AG04449 (cell line): ENCODE measurements at regions of chr17 and their contacts with region 1.

Region 1: GRCh38 chr17:15502369-15503112 is 35.1 kb upstream of the CDRT4 start:
- DNase-seq: peak; percentile 67
- H3K4me3 ChIP-seq: peak overlapping the region; percentile 33
- CTCF ChIP-seq: peak; percentile 88

Region 2: DNA sequence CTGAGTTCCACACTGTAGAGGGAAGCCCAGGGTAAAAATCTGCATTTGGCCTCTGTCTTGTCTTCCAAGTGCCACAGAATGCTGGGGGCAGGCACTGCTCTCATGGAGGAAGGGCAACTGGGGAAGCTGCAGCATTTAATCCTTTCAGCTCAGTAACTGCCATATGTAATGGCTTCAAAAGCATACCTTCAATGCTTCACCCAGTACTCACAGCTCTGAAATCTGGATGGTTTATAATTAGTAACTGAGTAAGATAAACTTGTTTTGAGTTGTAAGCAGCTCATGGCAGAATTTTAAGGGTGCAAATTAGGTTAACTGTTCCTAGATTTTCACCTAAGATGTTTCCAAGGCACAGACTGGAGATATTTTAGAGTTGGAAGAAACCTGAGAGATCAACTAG is 261.9 kb before region 1 on chr17:
- CTCF ChIA-PET with region 1: interaction called, 21 read pairs
- POLR2A ChIA-PET with region 1: interaction called, 3 read pairs
- DNase-seq: no peak
- H3K4me3 ChIP-seq: no peak overlapping the region
- CTCF ChIP-seq: no peak

Region 3: GRCh38 chr17:15257258-15257788 is 245.2 kb before region 1 on chr17:
- CTCF ChIA-PET with region 1: interaction called, 318 read pairs
- POLR2A ChIA-PET with region 1: interaction called, 4 read pairs
- DNase-seq: no peak
- H3K4me3 ChIP-seq: peak overlapping the region; percentile 19; the same call in 1 of the 2 replicates
- CTCF ChIP-seq: peak; percentile 91

Region 4: GRCh38 chr17:15361151-15361550 is 141.4 kb before region 1 on chr17:
- CTCF ChIA-PET with region 1: no interaction called
- POLR2A ChIA-PET with region 1: no interaction called
- DNase-seq: no peak
- H3K4me3 ChIP-seq: no peak overlapping the region
- CTCF ChIP-seq: no peak

Region 5: DNA sequence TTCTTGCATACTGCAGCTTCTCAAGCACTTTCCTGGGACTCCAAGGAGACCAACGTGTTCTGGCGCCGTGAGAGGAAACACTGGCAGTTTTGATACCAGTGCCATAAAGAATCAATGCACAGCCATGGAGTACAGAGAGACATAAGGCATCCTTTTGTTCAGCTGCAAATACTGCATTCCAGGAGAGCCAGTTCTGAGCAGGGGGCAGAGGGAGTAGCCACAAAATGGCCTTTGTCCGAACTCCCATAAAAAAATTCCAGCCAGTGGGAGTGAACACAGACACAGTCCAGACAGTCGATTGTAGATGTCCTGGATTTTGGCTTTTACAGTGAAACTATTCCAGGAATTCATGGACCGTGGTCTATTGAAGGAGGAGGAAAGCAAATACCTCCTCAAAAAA is 124.9 kb before region 1 on chr17:
- CTCF ChIA-PET with region 1: interaction called, 12 read pairs
- POLR2A ChIA-PET with region 1: no interaction called
- DNase-seq: peak; percentile 21
- H3K4me3 ChIP-seq: no peak overlapping the region
- CTCF ChIP-seq: no peak

Region 6: GRCh38 chr17:15438491-15439105 is 63.9 kb before region 1 on chr17:
- CTCF ChIA-PET with region 1: no interaction called
- POLR2A ChIA-PET with region 1: no interaction called
- DNase-seq: no peak
- H3K4me3 ChIP-seq: no peak overlapping the region
- CTCF ChIP-seq: no peak

Region 7: DNA sequence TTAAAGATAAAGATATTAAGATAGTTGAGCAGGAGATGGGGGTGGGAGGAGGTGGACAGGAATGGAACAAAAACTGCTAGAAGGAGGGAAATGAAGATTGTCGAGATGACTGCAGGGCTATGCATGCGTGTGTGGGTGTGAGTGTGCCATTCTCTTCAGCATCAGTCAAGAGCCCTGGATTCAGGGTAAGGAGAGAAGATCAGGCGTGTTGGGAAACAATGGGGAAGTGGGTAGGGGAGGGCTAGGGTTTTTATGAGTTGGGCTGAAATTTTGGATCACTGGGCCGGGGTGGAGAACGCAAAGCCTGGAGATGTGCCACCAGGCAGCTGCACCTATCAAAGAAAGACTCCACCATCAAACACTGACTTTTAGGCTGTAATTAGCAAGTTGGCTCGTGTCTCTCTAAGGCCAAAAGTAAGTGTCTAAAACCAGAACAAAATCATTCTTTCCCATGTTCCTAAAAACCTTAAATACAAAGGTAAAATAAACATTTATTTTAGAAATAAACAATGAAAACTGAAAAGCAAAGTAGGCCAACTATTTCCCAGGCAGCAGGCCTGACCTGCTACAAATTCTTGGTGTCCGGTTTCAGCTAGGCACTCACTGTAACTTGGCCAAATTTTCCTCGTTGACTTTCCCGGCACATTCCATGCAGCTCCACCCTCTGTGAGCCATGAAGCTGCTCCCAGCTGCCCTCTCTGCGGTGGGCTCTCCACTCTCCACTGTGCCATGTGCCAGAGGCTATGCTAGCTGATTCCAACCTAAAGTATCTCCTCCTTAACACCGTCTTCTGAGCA is 39.4 kb before region 1 on chr17:
- CTCF ChIA-PET with region 1: interaction called, 22 read pairs
- POLR2A ChIA-PET with region 1: no interaction called
- DNase-seq: no peak
- H3K4me3 ChIP-seq: no peak overlapping the region
- CTCF ChIP-seq: no peak

Region 8: DNA sequence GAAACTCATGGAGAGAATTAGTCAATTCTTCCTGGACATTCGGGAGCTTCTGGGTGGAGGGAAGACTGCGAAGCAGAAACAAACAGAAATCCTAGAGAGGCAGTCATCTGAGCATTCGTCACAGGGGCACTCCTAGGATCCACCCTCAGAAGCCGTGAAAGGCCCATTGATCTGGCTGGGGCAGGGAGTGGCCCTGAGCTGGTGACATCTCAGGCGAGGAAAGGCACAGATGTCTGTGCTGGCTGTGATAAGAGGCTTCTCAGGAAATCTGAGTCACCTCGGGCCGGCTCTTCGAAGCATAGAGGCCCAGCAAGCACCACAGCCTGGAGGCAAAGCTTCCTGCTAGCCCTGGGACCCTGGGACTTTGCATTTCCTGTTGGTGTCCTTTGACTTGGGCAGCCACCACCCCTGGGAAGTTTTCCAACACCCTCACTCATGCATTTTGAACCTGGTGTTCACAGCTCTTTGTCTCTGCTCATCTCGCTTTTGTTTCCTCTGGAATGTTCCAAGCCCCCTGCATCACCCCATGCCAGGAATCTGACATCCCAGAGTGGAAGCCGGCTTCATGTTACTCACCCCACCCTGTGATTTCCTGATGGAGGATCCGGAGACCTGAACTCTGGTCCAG is 11.8 kb before region 1 on chr17:
- CTCF ChIA-PET with region 1: interaction called, 53 read pairs
- POLR2A ChIA-PET with region 1: no interaction called
- DNase-seq: no peak
- H3K4me3 ChIP-seq: no peak overlapping the region
- CTCF ChIP-seq: no peak

Region 9: GRCh38 chr17:15651583-15652110 is 149.1 kb after region 1 on chr17:
- CTCF ChIA-PET with region 1: no interaction called
- POLR2A ChIA-PET with region 1: no interaction called
- DNase-seq: peak; percentile 91
- H3K4me3 ChIP-seq: peak overlapping the region; percentile 99
- CTCF ChIP-seq: no peak